ENCODE measurements at regions of chr3 and their contacts with region 1.

Region 1: DNA sequence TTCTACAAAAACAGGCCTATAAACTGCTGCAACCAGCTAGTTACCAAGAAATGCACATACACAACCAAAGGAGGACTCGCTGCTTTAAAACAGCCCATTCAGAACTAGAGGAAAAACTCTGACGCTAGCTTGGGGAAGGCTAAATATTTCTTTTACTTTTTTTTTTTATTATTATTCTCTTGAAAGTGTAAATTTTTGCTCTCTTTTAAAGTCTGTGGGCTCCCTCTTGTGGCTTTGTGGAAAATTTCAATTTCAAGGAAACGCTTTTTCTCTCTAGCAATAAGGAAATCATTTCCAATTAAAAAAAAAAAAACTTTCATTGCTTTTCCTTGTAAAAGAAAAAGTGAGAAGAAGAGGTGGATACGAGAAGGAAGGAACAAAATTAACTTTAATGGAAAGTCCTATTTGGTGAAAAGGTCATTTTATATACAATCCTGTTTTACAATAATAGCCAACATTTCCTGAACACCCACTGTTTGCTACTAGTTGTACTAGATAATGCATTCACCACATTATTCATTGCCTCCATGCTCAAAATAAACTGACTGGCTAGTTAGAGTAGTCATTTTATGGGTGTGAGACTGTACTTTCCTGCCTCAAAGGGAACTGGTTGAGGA is 51.2 kb upstream of the SAMMSON start:
- DNase-seq: no peak
- H3K4me3 ChIP-seq: no peak overlapping the region
- H3K27ac ChIP-seq: no peak overlapping the region
- H3K4me1 ChIP-seq: no peaks in the 10 kb centered on the region
- H3K27me3 ChIP-seq: no peaks in the 10 kb centered on the region
- CTCF ChIP-seq: peak; percentile 59 to 64

Region 2: GRCh38 chr3:69691860-69692259 is 256.5 kb before region 1 on chr3:
- intact Hi-C with region 1: loop called (anchors 5 kb)
- DNase-seq: no peak
- H3K4me3 ChIP-seq: no peak overlapping the region
- H3K27ac ChIP-seq: no peak overlapping the region
- H3K4me1 ChIP-seq: peaks cover 0 to 11% (median 3%) of the 10 kb centered on the region in 4 donors
- H3K27me3 ChIP-seq: no peaks in the 10 kb centered on the region
- CTCF ChIP-seq: no peak

Region 3: DNA sequence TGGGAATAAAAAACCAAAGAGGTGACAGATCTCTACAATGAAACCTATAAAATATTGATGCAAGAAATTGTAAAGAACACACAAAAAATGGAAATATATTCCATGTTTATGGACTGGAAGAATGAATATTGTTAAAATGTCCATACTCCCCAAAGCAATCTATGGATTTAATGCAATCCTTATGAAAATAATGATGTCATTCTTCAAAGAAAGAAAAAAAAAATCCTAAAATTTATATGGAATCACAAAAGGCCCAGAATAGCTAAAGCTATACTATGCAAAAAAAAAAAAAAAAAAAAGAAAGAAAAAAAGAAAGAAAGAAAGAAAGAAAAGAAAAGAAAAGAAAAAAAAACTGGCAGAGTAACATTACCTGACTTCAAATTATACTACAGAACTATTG is 508.6 kb after region 1 on chr3:
- intact Hi-C with region 1: no loop called
- DNase-seq: no peak
- H3K4me3 ChIP-seq: no peak overlapping the region
- H3K27ac ChIP-seq: no peak overlapping the region
- H3K4me1 ChIP-seq: no peaks in the 10 kb centered on the region
- H3K27me3 ChIP-seq: no peaks in the 10 kb centered on the region
- CTCF ChIP-seq: no peak